ENCODE measurements at regions of chr13 and their contacts with region 1.

Region 1: GRCh38 chr13:75482070-75482819 is at the start of gene TBC1D4:
- DNase-seq: peak; percentile 59
- H3K4me3 Mint-ChIP-seq: peak within 1 kb of the TSS; percentile 86
- H3K27ac Mint-ChIP-seq: no peak within 1 kb of the TSS
- H3K4me1 Mint-ChIP-seq: peaks cover 14% of the 10 kb centered on the region
- H3K27me3 Mint-ChIP-seq: peaks cover 62% of the 10 kb centered on the region
- total RNA-seq, gene TBC1D4: 8.0 to 10.1 TPM

Region 2: GRCh38 chr13:75492389-75492788 is 10.1 kb after region 1 on chr13:
- CTCF ChIA-PET with region 1: interaction called, 11 read pairs
- POLR2A ChIA-PET with region 1: no interaction called
- DNase-seq: no peak
- H3K4me3 Mint-ChIP-seq: no peak overlapping the region
- H3K27ac Mint-ChIP-seq: no peak overlapping the region
- H3K4me1 Mint-ChIP-seq: peaks cover 5% of the 10 kb centered on the region
- H3K27me3 Mint-ChIP-seq: peaks cover 25% of the 10 kb centered on the region

Region 3: GRCh38 chr13:75596657-75597182 is 114.5 kb after region 1 on chr13:
- CTCF ChIA-PET with region 1: no interaction called
- POLR2A ChIA-PET with region 1: no interaction called
- DNase-seq: no peak
- H3K4me3 Mint-ChIP-seq: no peak overlapping the region
- H3K27ac Mint-ChIP-seq: no peak overlapping the region
- H3K4me1 Mint-ChIP-seq: no peaks in the 10 kb centered on the region
- H3K27me3 Mint-ChIP-seq: no peaks in the 10 kb centered on the region